ENCODE measurements at regions of chr6 and their contacts with region 1.

Region 1: DNA sequence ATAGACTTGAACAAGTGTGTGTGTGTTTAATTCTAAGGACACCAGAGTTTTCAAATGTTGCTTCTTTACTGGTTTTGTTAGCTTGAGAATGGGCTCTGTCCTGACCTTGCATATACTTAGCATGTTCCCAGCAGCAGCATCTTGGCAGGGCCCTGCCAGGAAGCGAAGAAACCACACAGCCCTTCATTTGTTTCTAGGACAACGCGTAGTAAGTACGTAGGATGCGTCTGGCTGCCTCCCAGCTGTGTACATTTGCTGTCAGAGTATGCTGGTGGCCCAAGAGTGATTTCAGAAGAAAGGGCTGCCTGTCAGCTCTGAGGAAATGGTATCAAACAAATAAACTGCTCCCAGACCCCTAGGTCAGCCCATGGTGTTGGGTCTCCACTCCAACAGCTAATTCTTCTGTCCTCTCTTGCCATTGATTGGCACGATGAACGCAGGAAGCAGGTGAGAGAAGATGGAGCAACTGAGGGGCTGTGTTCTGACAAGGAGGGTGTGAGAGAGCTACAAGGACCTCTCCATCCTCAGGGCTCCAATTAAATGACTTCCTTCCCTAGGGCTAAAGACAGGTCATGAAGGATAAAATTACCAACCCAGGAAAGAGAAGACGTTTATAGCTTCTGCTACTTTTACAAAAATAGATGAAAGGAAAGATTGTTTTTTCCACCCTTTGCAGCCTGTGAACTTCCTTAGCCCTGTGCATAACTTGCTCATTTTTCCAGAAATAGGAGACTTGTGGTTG is 55.9 kb upstream of the HDDC2 start:
- DNase-seq: no peak
- H3K4me3 Mint-ChIP-seq: no peak overlapping the region
- H3K27ac Mint-ChIP-seq: no peak overlapping the region
- H3K4me1 Mint-ChIP-seq: peaks cover 5% of the 10 kb centered on the region
- H3K27me3 Mint-ChIP-seq: peaks cover 20% of the 10 kb centered on the region
- CTCF ChIP-seq: no peak

Region 2: DNA sequence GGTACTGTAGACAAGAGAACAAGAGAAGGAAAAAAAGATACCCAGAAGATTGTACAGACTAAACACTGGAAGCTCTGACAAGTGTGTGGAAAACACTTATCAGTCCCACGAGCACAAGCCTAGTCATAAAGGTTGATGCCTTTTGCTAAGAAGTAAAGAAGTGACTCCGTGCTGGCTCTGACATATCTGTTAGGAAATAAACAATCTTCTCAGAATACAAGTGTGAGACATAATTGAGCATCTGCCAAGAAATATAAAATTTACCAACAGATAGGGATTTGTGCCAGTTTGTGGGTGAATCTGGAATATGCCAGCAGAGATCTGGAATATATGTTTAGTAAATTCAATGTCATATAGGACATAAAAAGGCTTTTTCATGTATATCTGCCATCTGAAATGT is 654.1 kb before region 1 on chr6:
- CTCF ChIA-PET with region 1: no interaction called
- intact Hi-C with region 1: loop called (anchors 5 kb)
- DNase-seq: no peak
- H3K4me3 Mint-ChIP-seq: no peak overlapping the region
- H3K27ac Mint-ChIP-seq: no peak overlapping the region
- H3K4me1 Mint-ChIP-seq: no peaks in the 10 kb centered on the region
- H3K27me3 Mint-ChIP-seq: no peaks in the 10 kb centered on the region
- CTCF ChIP-seq: no peak

Region 3: DNA sequence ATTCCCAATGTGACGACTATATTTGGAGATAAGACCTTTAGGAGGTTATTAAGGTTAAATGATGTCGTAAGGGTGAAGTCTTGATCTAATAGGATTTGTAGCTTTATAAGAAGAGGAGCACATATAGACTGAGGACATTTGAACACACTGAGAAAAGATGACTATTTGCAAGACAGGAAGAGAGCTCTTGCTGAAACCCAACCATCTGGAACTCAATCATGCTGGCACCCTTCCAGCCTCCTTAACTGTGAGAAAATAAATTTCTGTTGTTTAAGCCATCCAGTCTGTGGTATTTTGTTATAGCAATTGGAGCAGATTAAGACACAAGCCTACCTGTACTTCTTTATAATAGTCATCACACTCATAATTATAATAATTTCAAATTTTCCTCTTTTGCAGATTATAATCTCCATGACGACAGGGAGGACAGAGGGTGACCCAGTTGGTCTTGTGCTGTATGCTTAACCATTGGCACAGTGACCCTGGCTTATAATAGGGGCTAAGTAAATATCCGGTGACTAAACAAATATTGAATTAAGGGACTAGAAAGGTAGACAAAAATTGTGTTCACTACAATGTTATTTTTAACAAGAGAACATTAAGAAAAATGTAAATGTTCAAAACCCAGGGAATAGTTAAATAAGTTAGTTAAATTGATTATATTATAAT is 150.4 kb after region 1 on chr6:
- CTCF ChIA-PET with region 1: no interaction called
- intact Hi-C with region 1: no loop called
- DNase-seq: no peak
- H3K4me3 Mint-ChIP-seq: no peak overlapping the region
- H3K27ac Mint-ChIP-seq: no peak overlapping the region
- H3K4me1 Mint-ChIP-seq: peaks cover 12% of the 10 kb centered on the region
- H3K27me3 Mint-ChIP-seq: peaks cover 14% of the 10 kb centered on the region
- CTCF ChIP-seq: no peak

Region 4: GRCh38 chr6:125688138-125688537 is 330.5 kb after region 1 on chr6:
- CTCF ChIA-PET with region 1: no interaction called
- intact Hi-C with region 1: no loop called
- DNase-seq: no peak
- H3K4me3 Mint-ChIP-seq: no peak overlapping the region
- H3K27ac Mint-ChIP-seq: no peak overlapping the region
- H3K4me1 Mint-ChIP-seq: no peaks in the 10 kb centered on the region
- H3K27me3 Mint-ChIP-seq: peaks cover 62% of the 10 kb centered on the region
- CTCF ChIP-seq: no peak